ENCODE measurements at regions of chr11 and their contacts with region 1.

Region 1: DNA sequence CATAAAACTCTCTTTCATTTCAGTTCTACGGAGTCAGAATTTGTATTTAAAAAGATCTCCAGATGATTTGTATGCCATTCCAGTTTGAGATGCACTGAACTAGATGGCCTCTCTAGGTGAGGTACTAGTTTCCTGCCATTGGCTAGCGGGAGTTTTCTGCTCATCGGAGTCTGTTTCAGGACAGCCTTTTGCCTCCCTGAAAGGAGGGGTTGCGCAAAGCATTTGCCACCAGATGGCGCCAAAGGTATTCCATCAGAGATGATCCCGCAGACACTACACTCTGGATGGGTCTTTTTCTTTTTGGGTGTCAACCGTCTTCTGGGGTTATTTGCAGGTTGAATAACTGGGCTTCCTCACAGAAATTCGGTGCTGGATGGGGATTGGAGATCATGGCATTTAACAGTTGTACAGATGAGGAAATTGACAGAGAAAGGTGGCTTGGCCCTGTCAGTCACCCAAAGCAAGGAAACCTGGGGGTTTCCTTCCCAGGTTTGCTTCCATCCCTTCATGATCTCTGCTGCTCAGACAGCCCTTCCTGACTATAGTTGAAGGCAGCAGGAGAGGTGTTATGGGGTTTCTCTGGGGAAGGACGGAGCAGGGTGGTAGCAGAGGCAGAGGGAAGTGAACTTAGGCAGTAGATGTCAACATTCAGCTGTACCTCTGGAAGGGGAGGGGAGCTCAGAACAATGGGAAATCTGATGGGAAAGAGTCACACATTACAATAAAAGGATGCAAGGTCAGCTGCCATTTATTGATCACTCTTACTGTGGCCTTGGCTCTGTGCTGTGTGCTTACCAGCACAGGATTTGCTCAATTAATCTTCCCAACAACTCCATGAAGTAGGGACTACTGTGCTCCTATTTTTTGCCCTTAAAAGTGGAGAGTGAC is 81.6 kb downstream of the CCDC81 start:
- DNase-seq: peak; percentile 86 to 93 (median 87)
- H3K4me3 ChIP-seq: no peak overlapping the region
- H3K27ac ChIP-seq: no peak overlapping the region
- H3K4me1 ChIP-seq: peaks cover 0 to 2% (median 0%) of the 10 kb centered on the region in 3 donors
- H3K27me3 ChIP-seq: no peaks in the 10 kb centered on the region
- CTCF ChIP-seq: peak; percentile 90

Region 2: DNA sequence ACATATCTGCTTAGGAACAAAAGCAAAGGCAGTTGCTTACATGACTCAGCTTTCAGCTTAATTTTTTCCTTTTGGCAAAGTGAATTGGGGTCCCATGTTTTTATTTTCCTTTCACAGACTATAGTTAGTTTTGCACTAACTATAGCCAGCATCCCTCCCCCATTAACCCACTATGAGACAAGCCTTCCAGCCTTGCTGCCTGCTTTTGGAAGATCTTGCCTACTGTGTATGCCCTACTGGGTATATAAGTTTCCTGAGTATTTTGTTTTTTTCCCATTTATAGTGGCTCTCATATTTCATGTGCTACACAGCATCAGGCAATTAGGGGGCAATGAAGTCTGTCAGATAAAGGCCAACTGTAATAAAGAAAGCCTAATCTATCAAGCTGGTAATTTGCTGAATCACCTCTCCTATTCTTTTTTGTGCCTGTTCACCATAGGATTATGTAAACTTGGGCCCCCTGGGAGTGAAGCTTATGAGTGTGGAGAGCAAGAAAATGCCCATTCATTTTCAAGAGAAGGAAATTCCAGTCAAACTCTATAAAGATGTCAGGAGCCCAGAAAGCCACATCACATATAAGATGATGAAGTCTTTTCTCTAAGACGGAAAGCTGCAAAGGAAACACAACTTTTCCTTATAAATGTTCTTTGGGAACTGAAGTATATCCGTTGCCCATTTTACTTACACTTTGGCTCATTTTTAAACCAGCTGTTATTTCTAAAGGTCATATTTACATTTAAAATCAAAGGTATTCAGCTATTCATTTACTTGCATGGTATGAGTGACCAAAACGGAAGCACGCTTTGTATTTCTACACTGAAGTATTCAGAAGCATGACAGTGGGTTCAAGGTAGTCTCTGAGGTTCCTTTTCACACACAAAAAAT is 537.1 kb before region 1 on chr11:
- intact Hi-C with region 1: no loop called
- DNase-seq: no peak
- H3K4me3 ChIP-seq: no peak overlapping the region
- H3K27ac ChIP-seq: no peak overlapping the region
- H3K4me1 ChIP-seq: no peaks in the 10 kb centered on the region
- H3K27me3 ChIP-seq: no peaks in the 10 kb centered on the region
- CTCF ChIP-seq: no peak

Region 3: DNA sequence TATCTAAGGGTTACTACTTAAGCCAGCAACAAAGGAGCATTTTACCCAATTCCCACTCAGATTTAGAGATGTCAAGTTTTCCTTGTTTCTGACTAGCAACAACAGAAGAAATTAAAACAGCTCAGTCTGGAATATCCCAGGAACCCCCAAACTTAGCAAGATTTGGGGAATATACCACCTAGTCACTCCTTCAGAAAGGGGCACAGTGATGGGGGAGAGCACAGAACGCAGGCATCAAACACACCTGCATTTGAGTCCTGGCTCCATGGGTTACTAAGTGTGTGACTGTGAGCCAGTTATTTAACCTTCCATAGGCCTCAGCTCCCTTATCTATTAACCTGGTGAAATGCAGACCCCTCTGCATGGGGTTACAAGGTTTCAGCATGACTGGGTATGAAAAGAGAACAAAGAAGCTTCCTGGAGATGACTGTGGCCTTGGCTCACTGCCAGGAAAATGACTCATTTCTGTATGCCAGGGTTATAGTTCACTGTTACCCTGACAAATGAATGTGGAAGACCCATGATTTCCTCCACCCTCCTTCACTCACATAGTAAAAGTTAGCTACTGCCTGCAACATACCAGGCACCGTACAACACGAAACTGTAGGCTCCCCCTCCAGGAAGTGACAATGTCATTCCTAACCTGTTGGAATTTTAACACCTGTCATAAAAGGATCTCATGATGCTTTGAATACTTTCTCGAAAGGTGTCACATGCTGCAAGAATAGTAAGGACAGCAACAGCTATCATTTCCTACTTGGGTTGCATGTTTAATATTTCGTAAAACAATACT is 136.6 kb after region 1 on chr11:
- intact Hi-C with region 1: loop called (anchors 10 kb)
- DNase-seq: peak in 4 of 5 donors; percentile 76 to 87 (median 82)
- H3K4me3 ChIP-seq: no peak overlapping the region
- H3K27ac ChIP-seq: peak overlapping the region; percentile 16 to 37
- H3K4me1 ChIP-seq: peaks cover 0 to 21% (median 16%) of the 10 kb centered on the region in 3 donors
- H3K27me3 ChIP-seq: no peaks in the 10 kb centered on the region
- CTCF ChIP-seq: no peak

Region 4: GRCh38 chr11:86818466-86819192 is 362.3 kb after region 1 on chr11:
- intact Hi-C with region 1: loop called (anchors 5 kb)
- DNase-seq: peak in 2 of 5 donors; percentile 74 to 88
- H3K4me3 ChIP-seq: no peak overlapping the region
- H3K27ac ChIP-seq: no peak overlapping the region
- H3K4me1 ChIP-seq: peaks cover 0 to 5% (median 3%) of the 10 kb centered on the region in 3 donors
- H3K27me3 ChIP-seq: no peaks in the 10 kb centered on the region
- CTCF ChIP-seq: peak; percentile 77

Measured in kidney (tissue), 22 donors.